ENCODE measurements at regions of chr14 and their contacts with region 1.

Region 1: DNA sequence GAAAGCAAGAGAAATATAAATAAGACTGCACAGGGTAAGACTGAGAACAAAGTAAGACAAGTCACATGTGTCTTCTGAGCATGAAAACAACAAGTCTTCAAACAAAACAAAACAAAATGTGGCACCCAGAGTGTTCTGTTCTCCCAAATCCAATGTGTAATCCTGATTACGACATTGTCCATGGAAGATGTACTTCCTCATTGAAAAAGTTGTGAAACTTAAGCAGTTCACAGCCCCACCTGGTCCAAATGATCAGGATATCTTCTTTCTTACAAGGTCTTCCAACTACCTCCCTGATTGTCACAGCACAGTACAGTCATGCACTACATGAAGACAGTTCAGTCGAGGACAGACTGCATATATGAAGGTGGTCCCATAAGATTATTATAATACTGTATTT is 23.3 kb upstream of the NEK9 start:
- DNase-seq: no peak
- H3K4me3 ChIP-seq: no peak overlapping the region
- H3K27ac ChIP-seq: no peak overlapping the region
- H3K4me1 ChIP-seq: peaks cover 10% of the 10 kb centered on the region
- H3K27me3 ChIP-seq: no peaks in the 10 kb centered on the region
- CTCF ChIP-seq: no peak

Region 2: GRCh38 chr14:73759714-73760597 is 1390.2 kb before region 1 on chr14:
- CTCF ChIA-PET with region 1: no interaction called
- POLR2A ChIA-PET with region 1: no interaction called
- intact Hi-C with region 1: no loop called
- DNase-seq: peak; percentile 97
- H3K4me3 ChIP-seq: peak overlapping the region; percentile 66
- H3K27ac ChIP-seq: peak overlapping the region; percentile 90
- H3K4me1 ChIP-seq: peaks cover 53% of the 10 kb centered on the region
- H3K27me3 ChIP-seq: no peaks in the 10 kb centered on the region
- CTCF ChIP-seq: no peak

Region 3: GRCh38 chr14:74081491-74081890 is 1068.7 kb before region 1 on chr14:
- CTCF ChIA-PET with region 1: no interaction called
- POLR2A ChIA-PET with region 1: interaction called, 11 read pairs
- intact Hi-C with region 1: no loop called
- DNase-seq: no peak
- H3K4me3 ChIP-seq: no peak overlapping the region
- H3K27ac ChIP-seq: no peak overlapping the region
- H3K4me1 ChIP-seq: peaks cover 8% of the 10 kb centered on the region
- H3K27me3 ChIP-seq: no peaks in the 10 kb centered on the region
- CTCF ChIP-seq: no peak

Measured in A673 (cell line).